ENCODE measurements at regions of chr12 and their contacts with region 1.

Region 1: GRCh38 chr12:131621701-131622421 is 89.0 kb upstream of the SFSWAP start:
- DNase-seq: no peak
- ATAC-seq: peak; percentile 35
- H3K4me3 ChIP-seq: no peak overlapping the region
- H3K27ac ChIP-seq: no peak overlapping the region
- H3K4me1 ChIP-seq: no peaks in the 10 kb centered on the region
- H3K27me3 ChIP-seq: peaks cover 19 to 69% of the 10 kb centered on the region in 2 experiments
- CTCF ChIP-seq: no peak
- EP300 ChIP-seq: no peak
- POLR2A ChIP-seq: no peak
- RAD21 ChIP-seq: no peak

Region 2: GRCh38 chr12:131345521-131346436 is 276.1 kb before region 1 on chr12:
- CTCF ChIA-PET with region 1: no interaction called
- POLR2A ChIA-PET with region 1: no interaction called
- in situ Hi-C with region 1: no loop called
- intact Hi-C with region 1: loop called (anchors 5 kb)
- DNase-seq: no peak
- ATAC-seq: no peak; the same call in 2 of the 3 replicates
- H3K4me3 ChIP-seq: no peak overlapping the region
- H3K27ac ChIP-seq: no peak overlapping the region
- H3K4me1 ChIP-seq: no peaks in the 10 kb centered on the region
- H3K27me3 ChIP-seq: peaks cover 3 to 13% of the 10 kb centered on the region in 2 experiments; a peak in 4 of 5 replicates
- CTCF ChIP-seq: no peak
- EP300 ChIP-seq: no peak
- POLR2A ChIP-seq: no peak
- RAD21 ChIP-seq: no peak

Region 3: GRCh38 chr12:131642101-131642540 is 20.3 kb after region 1 on chr12:
- CTCF ChIA-PET with region 1: no interaction called
- POLR2A ChIA-PET with region 1: no interaction called
- in situ Hi-C with region 1: no loop called
- intact Hi-C with region 1: no loop called
- DNase-seq: peak; percentile 9
- ATAC-seq: peak; percentile 30
- H3K4me3 ChIP-seq: no peak overlapping the region
- H3K27ac ChIP-seq: no peak overlapping the region
- H3K4me1 ChIP-seq: no peaks in the 10 kb centered on the region
- H3K27me3 ChIP-seq: peaks cover 3 to 6% of the 10 kb centered on the region in 2 experiments; a peak in 4 of 5 replicates
- CTCF ChIP-seq: no peak
- EP300 ChIP-seq: no peak
- POLR2A ChIP-seq: no peak
- RAD21 ChIP-seq: no peak

Region 4: DNA sequence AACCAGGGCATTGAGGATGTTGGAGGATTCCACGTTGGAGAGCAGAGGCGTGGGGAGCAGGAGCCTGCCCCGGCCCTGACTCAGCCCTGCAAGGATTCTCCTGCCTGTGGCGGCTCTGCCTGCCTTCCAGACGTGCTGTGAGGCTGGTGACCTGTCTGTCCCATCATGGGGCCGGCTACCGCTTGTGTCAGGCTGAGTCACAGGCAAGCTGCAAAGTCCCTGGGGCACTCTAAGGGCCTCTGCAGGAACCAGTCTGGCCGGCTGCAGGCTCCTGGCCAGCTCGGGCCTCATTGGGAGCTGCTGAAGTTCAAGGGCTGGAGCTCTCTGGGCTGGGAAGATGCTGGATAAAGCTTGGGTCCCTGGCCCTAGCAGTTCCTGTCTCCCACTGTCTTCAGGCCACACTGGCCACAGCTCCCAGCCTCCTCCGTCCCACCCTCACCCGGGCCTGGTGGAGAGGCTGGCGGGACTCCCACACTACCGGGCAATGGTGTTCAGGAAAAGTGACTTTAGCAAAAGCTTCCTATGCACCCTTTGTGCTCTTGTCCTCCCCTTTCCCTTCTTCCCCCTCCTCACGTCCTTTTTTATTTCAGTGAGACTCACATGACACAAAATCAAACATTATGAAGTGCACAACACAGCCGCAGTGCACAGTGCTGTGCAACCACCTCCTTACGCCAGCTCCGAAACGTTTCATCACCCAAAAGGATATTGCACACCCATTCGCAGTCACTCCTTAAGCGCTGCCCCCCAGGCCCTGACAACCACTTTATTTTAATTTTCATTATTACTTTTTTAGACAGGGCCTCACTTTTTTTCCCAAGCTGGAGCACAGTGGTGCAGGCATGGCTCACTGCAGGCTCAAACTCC is 250.6 kb after region 1 on chr12:
- CTCF ChIA-PET with region 1: no interaction called
- POLR2A ChIA-PET with region 1: no interaction called
- in situ Hi-C with region 1: no loop called
- intact Hi-C with region 1: no loop called
- DNase-seq: no peak
- ATAC-seq: peak; percentile 77
- H3K4me3 ChIP-seq: no peak overlapping the region
- H3K27ac ChIP-seq: no peak overlapping the region
- H3K4me1 ChIP-seq: peaks cover 9% of the 10 kb centered on the region; the same call in 1 of the 2 replicates
- H3K27me3 ChIP-seq: peaks cover 0 to 11% of the 10 kb centered on the region in 2 experiments; a peak in 1 of 5 replicates
- CTCF ChIP-seq: no peak
- EP300 ChIP-seq: no peak
- POLR2A ChIP-seq: no peak
- RAD21 ChIP-seq: no peak